ENCODE measurements at regions of chr16 and their contacts with region 1.

Region 1: DNA sequence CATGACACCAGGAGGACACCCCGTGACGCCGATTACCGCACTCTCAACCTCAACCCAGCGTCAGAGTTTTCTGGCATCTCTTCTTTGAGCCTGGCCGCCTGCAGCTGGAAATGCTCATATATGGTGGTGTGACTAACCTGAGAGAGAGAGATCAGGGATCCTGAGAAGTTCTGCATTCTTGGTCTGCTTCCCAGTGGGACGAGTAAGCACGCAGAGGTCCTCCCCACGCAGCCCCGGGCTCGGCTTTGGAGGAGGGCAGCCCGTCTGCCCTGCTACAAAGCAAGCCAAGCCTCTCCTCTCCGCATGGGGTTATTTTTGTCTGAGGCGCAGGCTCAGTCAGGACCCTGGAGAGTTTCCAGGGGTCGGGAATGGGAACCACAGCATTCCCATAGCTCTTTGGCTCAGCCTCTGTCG is 16.5 kb downstream of the CRISPLD2 start:
- DNase-seq: peak; percentile 82 to 88 (median 87)
- ATAC-seq: peak; percentile 66 to 91 (median 78)
- H3K4me3 ChIP-seq: peak overlapping the region in 7 of 12 donors; percentile 2 to 35 (median 12)
- H3K27ac ChIP-seq: peak overlapping the region; percentile 3 to 97 (median 70)
- H3K4me1 ChIP-seq: peaks cover 0 to 62% (median 25%) of the 10 kb centered on the region in 12 donors
- H3K27me3 ChIP-seq: peaks cover 0 to 5% (median 1%) of the 10 kb centered on the region in 9 donors
- CTCF ChIP-seq: no peak
- POLR2A ChIP-seq: no peak

Region 2: GRCh38 chr16:84881702-84882521 is 45.7 kb after region 1 on chr16:
- intact Hi-C with region 1: loop called in 1 of 10 experiments (anchors 5 kb)
- DNase-seq: peak in 4 of 5 donors; percentile 39 to 72 (median 53)
- ATAC-seq: peak in 3 of 4 donors; percentile 37 to 82 (median 70)
- H3K4me3 ChIP-seq: no peak overlapping the region
- H3K27ac ChIP-seq: peak overlapping the region in 5 of 12 donors; percentile 6 to 42 (median 39)
- H3K4me1 ChIP-seq: peaks cover 0 to 38% (median 14%) of the 10 kb centered on the region in 12 donors
- H3K27me3 ChIP-seq: no peaks in the 10 kb centered on the region
- CTCF ChIP-seq: no peak
- POLR2A ChIP-seq: no peak

Region 3: GRCh38 chr16:84925092-84925772 is 89.0 kb after region 1 on chr16:
- intact Hi-C with region 1: loop called in 2 of 10 experiments (anchors 5 to 10 kb)
- DNase-seq: peak; percentile 56 to 86 (median 64)
- ATAC-seq: peak in 1 of 4 donors; percentile 19
- H3K4me3 ChIP-seq: no peak overlapping the region
- H3K27ac ChIP-seq: peak overlapping the region in 8 of 12 donors; percentile 44 to 89 (median 54)
- H3K4me1 ChIP-seq: peaks cover 0 to 69% (median 38%) of the 10 kb centered on the region in 12 donors
- H3K27me3 ChIP-seq: no peaks in the 10 kb centered on the region
- CTCF ChIP-seq: peak; percentile 64 to 91 (median 80)
- POLR2A ChIP-seq: no peak

Region 4: DNA sequence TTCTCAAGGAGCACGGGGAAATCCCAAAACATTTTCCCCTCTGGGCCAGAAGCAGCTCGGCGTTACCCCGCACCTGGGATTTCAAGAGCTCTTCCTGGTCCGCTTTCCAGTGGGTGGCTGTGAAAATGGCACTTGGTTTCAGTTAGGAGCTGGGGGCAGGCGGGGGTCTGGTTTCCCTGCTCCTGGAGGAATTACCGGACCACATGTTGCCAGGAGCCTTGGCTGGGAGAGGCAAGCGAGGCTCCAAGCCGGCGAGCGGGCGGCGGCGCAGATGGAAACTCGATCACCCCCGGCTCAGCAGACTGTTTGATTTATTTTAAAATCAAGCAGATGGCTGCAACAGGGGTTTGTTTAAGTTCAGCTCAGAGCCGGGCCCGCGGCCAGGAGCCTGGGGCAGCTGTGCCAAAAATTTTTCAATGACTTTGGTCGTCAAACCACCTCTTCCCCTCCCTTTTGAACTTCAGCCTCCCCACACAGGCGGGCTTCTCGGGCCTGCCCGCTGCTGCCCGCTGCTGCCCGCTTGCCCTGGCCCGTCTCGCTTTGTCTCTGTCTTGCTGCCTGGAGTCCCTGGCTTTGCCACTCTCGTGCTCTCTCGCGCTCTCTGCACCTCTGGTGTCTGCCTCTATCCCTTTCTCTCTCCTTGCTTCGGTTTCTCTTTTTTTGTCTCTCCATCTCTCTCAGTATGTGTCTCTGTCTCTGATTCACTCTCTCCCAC is 384.0 kb after region 1 on chr16:
- intact Hi-C with region 1: no loop called
- DNase-seq: peak; percentile 77 to 88 (median 86)
- ATAC-seq: peak; percentile 63 to 89 (median 88)
- H3K4me3 ChIP-seq: peak overlapping the region in 10 of 12 donors; percentile 20 to 51 (median 38)
- H3K27ac ChIP-seq: peak overlapping the region in 11 of 12 donors; percentile 54 to 82 (median 70)
- H3K4me1 ChIP-seq: peaks cover 6 to 20% (median 16%) of the 10 kb centered on the region in 12 donors
- H3K27me3 ChIP-seq: no peaks in the 10 kb centered on the region
- CTCF ChIP-seq: peak in 2 of 12 donors; percentile 23 to 41
- POLR2A ChIP-seq: no peak

Measured in heart left ventricle (tissue), 16 donors.